BJ (cell line): ENCODE measurements at regions of chr20 and their contacts with region 1.

Region 1: DNA sequence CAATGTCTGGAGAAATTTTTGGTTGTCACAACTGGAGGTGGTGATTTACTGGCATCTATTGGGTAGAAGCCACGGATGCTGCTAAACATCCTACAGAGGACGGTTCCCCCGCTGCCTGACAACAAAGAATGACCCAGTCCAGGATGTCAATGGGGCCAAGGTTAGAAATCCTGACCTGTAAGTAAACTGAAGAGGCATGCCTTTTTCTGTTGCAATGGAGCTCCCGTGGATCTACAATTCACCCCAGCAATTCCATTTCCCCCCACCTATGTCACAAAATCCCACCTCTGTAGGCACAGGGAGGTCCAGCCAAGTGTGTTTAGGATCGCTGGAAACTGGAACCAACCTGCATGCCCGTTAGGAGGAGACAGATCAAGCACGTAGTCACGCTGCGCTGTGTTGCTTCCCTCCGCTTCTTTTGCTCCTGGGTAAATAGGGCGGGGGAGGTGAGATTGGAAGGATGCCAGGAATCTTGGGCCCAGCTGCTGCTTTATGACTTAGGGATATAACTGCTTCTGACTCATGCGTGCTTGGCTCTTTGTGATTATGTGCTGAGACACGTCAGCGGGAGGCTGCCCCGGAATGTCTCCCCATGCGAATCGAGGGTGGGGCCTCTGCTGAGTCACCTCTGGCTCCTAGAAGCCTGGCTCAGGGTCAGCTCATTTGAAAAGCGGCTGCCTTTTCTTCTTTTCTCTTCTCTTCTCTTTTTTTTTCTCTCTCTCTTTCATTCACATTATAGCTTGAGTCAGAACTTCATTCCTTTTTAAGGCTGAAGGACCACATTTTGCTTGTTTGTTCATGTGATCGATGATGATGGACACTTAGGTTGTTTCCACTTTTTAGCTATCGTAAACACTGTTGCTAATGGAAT is 12.4 kb upstream of the PEDS1 start:
- DNase-seq: peak; percentile 99
- H3K4me3 ChIP-seq: peak overlapping the region; percentile 25
- H3K27me3 ChIP-seq: no peaks in the 10 kb centered on the region
- CTCF ChIP-seq: no peak

Region 2: GRCh38 chr20:49982346-49983122 is 183.4 kb before region 1 on chr20 and contains the start of gene SNAI1:
- CTCF ChIA-PET with region 1: interaction called, 32 read pairs
- POLR2A ChIA-PET with region 1: no interaction called
- DNase-seq: no peak
- H3K4me3 ChIP-seq: peak within 1 kb of the TSS; percentile 58
- H3K27me3 ChIP-seq: no peaks in the 10 kb centered on the region
- CTCF ChIP-seq: peak; percentile 44
- polyA plus RNA-seq, gene SNAI1: 3.6 and 6.5 TPM in 2 replicates

Region 3: GRCh38 chr20:50085452-50086365 is 80.2 kb before region 1 on chr20:
- CTCF ChIA-PET with region 1: interaction called, 13 read pairs
- POLR2A ChIA-PET with region 1: no interaction called
- DNase-seq: no peak
- H3K4me3 ChIP-seq: no peak overlapping the region
- H3K27me3 ChIP-seq: no peaks in the 10 kb centered on the region
- CTCF ChIP-seq: peak; percentile 84

Region 4: DNA sequence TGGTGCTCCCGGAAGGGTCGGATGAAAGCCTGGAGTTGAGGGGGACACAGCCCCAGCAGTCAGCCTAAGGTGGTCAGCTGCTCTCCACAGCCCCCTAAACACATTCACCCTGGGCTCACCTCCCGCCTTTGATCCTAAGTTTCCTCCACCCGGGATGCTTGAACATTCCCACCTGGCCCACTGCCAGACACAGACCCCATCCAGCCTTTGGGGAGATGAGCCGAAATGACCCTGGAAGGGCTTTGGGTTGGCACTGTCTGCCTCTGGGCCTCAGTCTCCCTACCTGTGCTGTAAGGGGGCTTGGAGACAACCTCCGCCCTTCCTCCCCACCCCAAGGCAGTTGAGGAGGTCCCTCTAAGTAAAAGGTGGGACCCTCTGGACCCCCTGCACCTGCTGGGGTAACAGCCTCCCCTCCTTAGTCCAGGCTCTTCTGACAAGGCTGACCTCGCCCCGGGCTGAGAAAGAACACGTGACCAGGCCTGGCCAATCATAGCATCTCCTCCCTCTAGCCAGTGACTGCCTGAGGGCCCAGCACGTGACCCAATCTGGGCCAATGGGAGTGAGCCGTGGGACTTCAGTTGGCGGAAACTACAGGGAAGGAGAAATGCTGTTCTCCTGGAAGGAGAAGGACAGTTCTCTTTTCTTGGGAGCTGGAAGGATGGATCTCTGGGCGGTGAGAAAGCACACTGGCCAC is 36.1 kb before region 1 on chr20:
- CTCF ChIA-PET with region 1: interaction called, 11 read pairs
- POLR2A ChIA-PET with region 1: no interaction called
- DNase-seq: no peak
- H3K4me3 ChIP-seq: no peak overlapping the region
- H3K27me3 ChIP-seq: no peaks in the 10 kb centered on the region
- CTCF ChIP-seq: no peak

Region 5: DNA sequence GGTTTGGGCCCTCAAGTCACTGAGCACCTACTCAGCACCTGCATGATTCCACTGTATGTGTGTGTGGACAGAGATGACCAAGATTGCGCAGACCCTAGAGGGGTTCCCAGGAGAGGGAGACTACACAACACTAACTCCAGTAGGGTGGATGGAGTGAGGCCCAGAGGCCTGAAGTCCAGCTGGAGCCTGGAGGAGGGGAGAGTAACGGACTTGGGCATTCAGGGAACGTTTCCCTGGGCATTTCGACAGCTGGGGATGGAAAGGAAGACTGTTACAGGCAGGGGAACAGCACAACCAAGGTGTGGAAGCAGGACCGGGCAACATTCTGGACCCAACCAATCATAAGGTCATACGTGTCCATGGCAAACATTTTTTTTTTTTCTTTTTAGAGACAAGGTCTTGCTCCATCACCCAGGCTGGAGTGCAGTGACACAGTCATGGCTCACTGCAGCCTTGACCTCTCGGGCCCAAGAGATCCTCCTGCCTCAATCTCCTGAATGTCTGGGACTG is 13.6 kb after region 1 on chr20:
- CTCF ChIA-PET with region 1: interaction called, 16 read pairs
- POLR2A ChIA-PET with region 1: no interaction called
- DNase-seq: no peak
- H3K4me3 ChIP-seq: no peak overlapping the region
- H3K27me3 ChIP-seq: no peaks in the 10 kb centered on the region
- CTCF ChIP-seq: no peak